ENCODE measurements at regions of chr3 and their contacts with region 1.

Region 1: GRCh38 chr3:139935016-139935865 is at the start of gene CLSTN2:
- DNase-seq: peak; percentile 60 to 97 (median 80)

Region 2: GRCh38 chr3:139427283-139427993 is 507.8 kb before region 1 on chr3:
- intact Hi-C with region 1: loop called (anchors 5 kb)
- DNase-seq: no peak

Region 3: GRCh38 chr3:139561959-139562676 is 373.1 kb before region 1 on chr3:
- intact Hi-C with region 1: loop called (anchors 10 kb)
- DNase-seq: peak in 2 of 10 donors; percentile 27 to 33

Region 4: DNA sequence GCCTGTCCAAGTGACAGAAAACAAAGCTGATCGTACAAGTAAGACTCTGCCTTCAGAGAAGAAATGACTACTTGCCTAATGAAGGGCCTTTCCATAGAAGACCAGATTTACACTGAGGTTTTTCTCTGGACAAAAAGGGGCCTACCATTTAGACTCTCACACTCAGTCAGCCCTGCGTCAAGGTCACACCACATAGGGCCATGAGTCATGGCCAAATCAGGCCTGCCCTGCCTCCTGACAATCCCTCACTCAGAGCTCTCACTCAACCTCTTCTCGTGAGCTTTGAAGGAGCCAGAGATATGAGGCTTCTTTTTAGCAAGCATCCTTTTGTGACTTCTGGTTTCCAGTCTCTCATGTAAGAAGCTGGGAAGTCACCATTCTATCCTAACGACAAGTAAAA is 189.4 kb before region 1 on chr3:
- intact Hi-C with region 1: no loop called
- DNase-seq: no peak

Region 5: GRCh38 chr3:140051019-140051957 is 116.0 kb after region 1 on chr3:
- intact Hi-C with region 1: loop called (anchors 1 kb)
- DNase-seq: peak in 9 of 10 donors; percentile 25 to 93 (median 60)

Region 6: GRCh38 chr3:140505213-140505612 is 570.0 kb after region 1 on chr3:
- intact Hi-C with region 1: loop called (anchors 10 kb)
- DNase-seq: no peak

Region 7: GRCh38 chr3:140736863-140737460 is 801.7 kb after region 1 on chr3:
- intact Hi-C with region 1: loop called (anchors 5 kb)
- DNase-seq: peak in 9 of 10 donors; percentile 35 to 93 (median 63)